Right ventricle myocardium inferior (tissue), 1 donor: ENCODE measurements at regions of chr12 and their contacts with region 1.

Region 1: DNA sequence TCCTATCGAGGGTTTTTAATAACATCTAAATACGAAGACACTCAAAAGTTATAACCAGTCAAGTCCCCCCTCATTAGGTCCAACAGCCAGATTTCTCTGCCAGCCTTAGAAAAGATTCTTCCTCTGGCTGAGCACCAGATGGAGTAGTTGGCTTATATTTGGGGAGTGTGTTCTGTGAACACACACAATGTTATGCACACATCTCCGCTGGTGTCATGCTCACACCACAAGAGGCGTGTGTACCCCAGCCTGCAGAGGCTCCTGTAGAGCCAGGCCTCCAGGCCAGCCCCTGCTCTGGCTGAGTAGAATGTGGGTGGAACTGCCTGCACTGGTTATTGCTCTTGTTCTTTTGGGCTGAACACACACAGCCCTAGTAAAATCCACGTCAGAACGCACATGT is 64.0 kb downstream of the PIWIL1 start:
- DNase-seq: no peak
- ATAC-seq: peak; percentile 37

Region 2: DNA sequence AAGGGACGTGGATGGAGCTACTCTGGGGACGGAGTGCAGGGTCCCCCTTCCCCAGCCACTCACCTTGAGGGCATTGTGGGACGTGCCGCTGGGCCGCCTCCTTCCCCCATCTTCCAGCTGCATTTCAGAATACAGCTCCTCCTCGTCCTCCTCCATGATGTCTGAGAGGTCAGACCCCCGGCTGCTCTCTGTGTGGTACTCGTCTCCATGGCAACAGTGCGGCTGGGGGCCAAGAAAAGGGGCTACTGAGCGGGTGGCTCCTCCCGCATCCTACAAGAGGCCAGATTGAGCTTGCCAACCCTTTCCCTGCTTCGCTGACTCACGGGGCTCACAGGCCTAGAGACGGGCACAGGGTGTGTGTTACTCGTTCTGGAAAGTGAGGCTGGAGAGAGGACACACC is 26.4 kb after region 1 on chr12:
- intact Hi-C with region 1: no loop called
- DNase-seq: no peak
- ATAC-seq: no peak

Region 3: DNA sequence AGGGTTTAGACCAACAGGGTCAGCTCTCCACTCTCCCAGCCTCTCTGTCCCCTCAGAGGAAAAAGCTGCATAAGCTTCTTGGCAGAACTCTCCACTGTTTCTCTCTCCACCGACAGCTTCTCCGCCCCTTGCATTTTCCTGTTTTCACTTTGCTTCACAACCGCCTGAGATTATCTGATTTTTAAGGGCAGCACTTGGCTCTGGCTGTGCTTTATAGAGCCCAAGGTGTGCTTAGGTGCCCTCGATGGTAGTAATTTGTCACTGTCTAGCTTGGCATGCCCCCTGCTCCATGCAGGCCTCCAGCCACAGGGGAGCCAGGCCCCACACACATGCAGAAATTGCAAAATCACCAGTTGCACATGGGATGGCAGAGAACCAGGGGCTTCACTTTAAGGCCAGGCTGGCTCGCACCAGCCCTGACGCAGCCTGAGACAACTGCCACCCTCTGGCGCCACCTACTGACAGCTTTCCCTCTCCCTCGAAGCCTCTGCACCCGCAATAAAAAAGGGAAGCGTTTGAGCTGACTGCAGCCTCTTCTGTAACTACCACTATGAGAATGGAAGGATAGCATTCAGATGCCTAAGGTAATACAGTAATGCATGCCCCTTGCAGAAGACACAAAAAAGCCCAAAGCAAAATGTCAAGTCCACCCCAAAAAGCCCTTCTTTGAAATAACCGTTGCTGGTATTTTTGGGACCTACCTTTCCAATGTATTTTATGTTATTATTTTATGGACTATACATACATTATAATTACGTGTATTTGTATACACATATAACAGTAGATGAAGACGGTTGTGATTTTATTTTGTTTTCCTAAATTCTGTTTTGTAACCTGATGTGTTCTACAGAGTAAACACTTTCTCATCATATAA is 346.4 kb after region 1 on chr12:
- intact Hi-C with region 1: loop called (anchors 2 kb)
- DNase-seq: peak; percentile 80
- ATAC-seq: peak; percentile 93